RWPE1 (cell line): ENCODE measurements at regions of chr20 and their contacts with region 1.

Region 1: GRCh38 chr20:41173161-41173721 is 35.9 kb downstream of the PLCG1 start:
- DNase-seq: peak; percentile 91
- H3K27ac ChIP-seq: peak overlapping the region; percentile 76
- CTCF ChIP-seq: peak; percentile 99

Region 2: GRCh38 chr20:41149679-41150131 is 23.5 kb before region 1 on chr20:
- CTCF ChIA-PET with region 1: interaction called, 12 read pairs
- POLR2A ChIA-PET with region 1: no interaction called
- DNase-seq: peak; percentile 64
- H3K27ac ChIP-seq: peak overlapping the region; percentile 24
- CTCF ChIP-seq: no peak

Region 3: DNA sequence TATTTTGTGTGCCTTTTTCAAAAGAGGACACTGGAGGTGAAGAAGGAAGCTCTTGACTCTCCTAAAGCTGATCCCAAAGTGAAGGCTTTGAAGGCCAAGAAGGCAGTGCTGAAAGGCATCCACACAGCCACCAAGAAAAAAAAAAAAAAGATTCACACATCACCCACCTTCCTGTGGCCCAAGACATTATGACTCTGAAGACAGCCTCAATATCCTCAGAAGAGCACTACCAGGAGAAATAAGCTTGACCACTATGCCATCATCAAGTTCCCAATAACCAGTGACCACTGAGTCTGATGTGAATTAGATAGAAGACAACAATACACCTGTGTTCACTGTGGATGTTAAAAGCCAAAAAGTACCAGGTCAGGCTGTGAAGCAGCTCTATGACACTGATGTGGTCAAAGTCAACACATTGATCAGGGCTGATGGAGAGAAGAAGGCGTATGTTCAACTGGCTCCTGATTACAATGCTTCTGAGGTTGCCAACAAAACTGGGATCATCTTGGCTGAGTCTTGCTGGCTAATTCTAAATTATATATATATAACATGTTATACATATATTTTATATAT is 23.5 kb after region 1 on chr20:
- CTCF ChIA-PET with region 1: interaction called, 10 read pairs
- POLR2A ChIA-PET with region 1: no interaction called
- DNase-seq: no peak
- H3K27ac ChIP-seq: no peak overlapping the region
- CTCF ChIP-seq: no peak

Region 4: DNA sequence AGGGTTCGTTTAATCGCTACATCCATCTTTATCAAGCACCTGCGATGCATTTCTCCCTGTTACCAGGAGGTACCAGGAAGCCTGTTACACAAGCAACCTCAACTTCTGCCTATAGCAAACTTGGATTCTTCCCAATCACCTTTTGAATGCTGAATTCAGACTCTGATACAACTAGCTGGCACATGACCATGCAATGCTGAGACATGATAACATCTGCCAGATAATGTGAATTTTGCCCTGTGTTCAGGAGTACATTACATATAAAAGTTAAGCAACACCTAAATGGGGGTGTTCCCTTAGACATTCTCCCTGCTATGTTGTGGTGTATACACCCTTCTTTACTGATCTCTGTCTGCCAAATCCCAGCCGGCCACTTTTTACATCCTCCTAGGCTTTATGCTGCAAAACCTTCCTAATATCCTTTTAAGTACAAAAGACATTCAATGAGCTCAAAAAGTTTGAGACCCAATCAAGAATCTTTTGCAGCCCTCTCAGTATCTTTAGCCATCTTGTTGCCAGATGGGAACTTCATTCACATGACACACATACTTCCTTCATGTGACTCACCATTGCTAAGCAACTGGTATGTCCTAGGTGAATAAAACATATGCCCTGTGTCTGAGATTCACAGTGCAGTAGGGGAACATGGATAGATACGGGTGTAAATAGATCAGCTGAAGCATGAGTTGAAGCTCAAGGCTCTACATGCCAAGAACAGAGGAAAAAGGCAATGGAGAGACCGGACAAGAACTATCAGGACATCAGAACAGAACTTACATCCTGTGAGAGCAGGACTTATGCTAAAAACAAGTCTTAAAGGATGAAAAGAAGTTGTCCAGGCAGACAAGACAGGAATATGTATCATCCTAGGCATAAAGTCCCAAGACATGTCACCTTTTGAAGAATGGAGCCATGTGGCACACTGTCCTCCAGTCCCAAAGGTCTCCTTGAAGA is 60.0 kb after region 1 on chr20:
- CTCF ChIA-PET with region 1: interaction called, 49 read pairs
- POLR2A ChIA-PET with region 1: no interaction called
- DNase-seq: peak; percentile 95
- H3K27ac ChIP-seq: peak overlapping the region; percentile 96
- CTCF ChIP-seq: no peak

Region 5: GRCh38 chr20:41286240-41286851 is 113.1 kb after region 1 on chr20:
- CTCF ChIA-PET with region 1: no interaction called
- POLR2A ChIA-PET with region 1: no interaction called
- DNase-seq: no peak
- H3K27ac ChIP-seq: no peak overlapping the region
- CTCF ChIP-seq: no peak